ENCODE measurements at regions of chr16 and their contacts with region 1.

Region 1: DNA sequence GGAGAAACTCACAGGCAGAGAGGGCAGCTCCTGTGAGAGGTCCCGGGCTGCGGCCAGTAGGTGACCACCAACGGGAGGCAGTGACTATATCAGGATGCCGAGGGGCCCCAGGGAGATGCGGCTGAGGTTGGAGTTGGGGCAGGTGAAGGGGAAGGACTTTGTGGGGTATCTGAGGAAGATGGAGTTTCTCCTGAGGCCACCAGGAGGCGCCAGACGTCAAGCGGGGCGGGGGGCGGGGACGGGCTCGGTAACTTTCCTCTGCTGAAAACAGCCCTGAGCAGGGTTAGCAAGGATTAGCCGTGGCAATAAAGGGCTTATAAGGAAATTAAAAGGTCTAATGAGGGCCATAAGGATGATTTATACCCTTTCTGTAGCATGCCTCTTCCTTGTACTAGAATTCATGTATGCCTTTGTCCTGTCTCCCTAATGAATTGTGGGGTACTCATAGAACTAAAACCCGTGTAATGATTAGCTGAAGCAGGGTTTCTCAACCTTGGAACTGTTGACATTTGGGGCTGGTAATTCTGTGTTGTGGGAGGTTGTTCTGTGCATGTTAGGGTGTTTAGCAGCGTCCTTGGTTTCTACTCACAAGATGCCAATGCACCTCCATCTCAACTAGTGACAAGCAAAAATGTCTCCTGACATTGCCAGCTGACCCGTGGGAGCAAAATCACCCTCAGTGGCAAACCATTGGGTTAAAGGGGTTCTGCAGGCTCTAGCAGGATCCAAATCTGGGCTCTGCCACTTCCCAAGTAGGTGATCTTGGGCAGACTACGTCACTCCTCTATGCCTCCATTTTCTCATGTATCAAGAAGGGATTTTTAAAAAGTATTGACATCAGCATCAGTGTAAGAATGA is 74.8 kb upstream of the GRIN2A start:
- DNase-seq: peak; percentile 9 to 64
- H3K4me3 ChIP-seq: peak overlapping the region in 1 of 4 experiments; percentile 23; a peak in 1 of 8 replicates
- H3K27ac ChIP-seq: no peak overlapping the region
- H3K4me1 ChIP-seq: peaks cover 0 to 8% (median 0%) of the 10 kb centered on the region in 4 experiments; a peak in 2 of 7 replicates
- H3K27me3 ChIP-seq: 0 out of 7 replicates have a peak, but pooled peaks cover 0 to 2% (median 0%) of the 10 kb centered on the region in 4 experiments
- CTCF ChIP-seq: peak; percentile 72 to 75 (median 73)
- EP300 ChIP-seq: no peak
- POLR2A ChIP-seq: no peak
- RAD21 ChIP-seq: peak; percentile 69 to 78

Region 2: GRCh38 chr16:10136916-10137315 is 120.1 kb before region 1 on chr16:
- CTCF ChIA-PET with region 1: no interaction called
- POLR2A ChIA-PET with region 1: no interaction called
- DNase-seq: peak in 1 of 2 experiments; percentile 53
- H3K4me3 ChIP-seq: no peak overlapping the region
- H3K27ac ChIP-seq: no peak overlapping the region
- H3K4me1 ChIP-seq: no peaks in the 10 kb centered on the region
- H3K27me3 ChIP-seq: no peaks in the 10 kb centered on the region
- CTCF ChIP-seq: peak; percentile 48 to 59 (median 48); a peak in 3 of 4 replicates
- EP300 ChIP-seq: no peak
- POLR2A ChIP-seq: no peak
- RAD21 ChIP-seq: peak; percentile 50 to 59

Region 3: GRCh38 chr16:10226141-10226986 is 30.6 kb before region 1 on chr16:
- CTCF ChIA-PET with region 1: interaction called, 10 read pairs
- POLR2A ChIA-PET with region 1: no interaction called
- DNase-seq: no peak
- H3K4me3 ChIP-seq: no peak overlapping the region
- H3K27ac ChIP-seq: no peak overlapping the region
- H3K4me1 ChIP-seq: no peaks in the 10 kb centered on the region
- H3K27me3 ChIP-seq: no peaks in the 10 kb centered on the region
- CTCF ChIP-seq: no peak
- EP300 ChIP-seq: no peak
- POLR2A ChIP-seq: no peak
- RAD21 ChIP-seq: no peak

Region 4: GRCh38 chr16:10242916-10243315 is 14.1 kb before region 1 on chr16:
- CTCF ChIA-PET with region 1: interaction called, 14 read pairs
- POLR2A ChIA-PET with region 1: interaction called, 3 read pairs
- DNase-seq: no peak
- H3K4me3 ChIP-seq: no peak overlapping the region
- H3K27ac ChIP-seq: no peak overlapping the region
- H3K4me1 ChIP-seq: no peaks in the 10 kb centered on the region; a peak in 1 of 7 replicates
- H3K27me3 ChIP-seq: no peaks in the 10 kb centered on the region
- CTCF ChIP-seq: no peak
- EP300 ChIP-seq: no peak
- POLR2A ChIP-seq: no peak
- RAD21 ChIP-seq: no peak

Region 5: DNA sequence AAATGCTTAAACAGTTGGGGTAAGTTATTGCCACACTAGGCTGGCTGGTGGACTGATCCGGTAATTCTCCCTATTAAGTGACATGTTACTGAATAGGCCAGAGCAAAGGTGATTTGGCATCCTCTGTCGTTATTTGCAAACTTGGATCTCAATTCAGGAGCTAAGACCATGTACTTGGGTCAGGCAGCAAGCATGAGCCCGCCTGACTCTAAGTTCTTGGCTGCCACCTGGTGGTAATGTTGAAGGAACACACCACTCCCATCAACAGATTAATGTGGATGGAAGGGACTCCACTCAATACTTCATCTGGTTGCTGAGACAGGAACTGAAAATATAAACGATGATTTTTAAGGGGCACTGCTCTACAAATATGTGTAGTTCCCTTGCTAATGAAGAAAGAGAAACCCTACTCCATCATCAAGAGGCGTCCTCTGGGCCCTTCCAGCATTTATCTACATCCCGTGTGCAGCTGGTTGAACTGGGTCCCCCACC is 252.6 kb after region 1 on chr16:
- CTCF ChIA-PET with region 1: interaction called, 12 read pairs
- POLR2A ChIA-PET with region 1: interaction called, 3 read pairs
- DNase-seq: peak; percentile 33 to 63
- H3K4me3 ChIP-seq: no peak overlapping the region
- H3K27ac ChIP-seq: no peak overlapping the region
- H3K4me1 ChIP-seq: peaks cover 0 to 9% (median 3%) of the 10 kb centered on the region in 4 experiments; a peak in 4 of 7 replicates
- H3K27me3 ChIP-seq: no peaks in the 10 kb centered on the region
- CTCF ChIP-seq: peak; percentile 64 to 93 (median 87)
- EP300 ChIP-seq: no peak
- POLR2A ChIP-seq: no peak
- RAD21 ChIP-seq: peak; percentile 97